ENCODE measurements at regions of chrX and their contacts with region 1.

Region 1: GRCh38 chrX:23952984-23953907 is 45.4 kb downstream of the CXorf58 start:
- DNase-seq: no peak
- ATAC-seq: peak in 1 of 2 donors; percentile 27

Region 2: GRCh38 chrX:24014388-24015018 is 61.3 kb after region 1 on chrX:
- intact Hi-C with region 1: loop called in 1 of 2 experiments (anchors 10 kb)
- DNase-seq: no peak
- ATAC-seq: peak in 1 of 2 donors; percentile 37

Region 3: DNA sequence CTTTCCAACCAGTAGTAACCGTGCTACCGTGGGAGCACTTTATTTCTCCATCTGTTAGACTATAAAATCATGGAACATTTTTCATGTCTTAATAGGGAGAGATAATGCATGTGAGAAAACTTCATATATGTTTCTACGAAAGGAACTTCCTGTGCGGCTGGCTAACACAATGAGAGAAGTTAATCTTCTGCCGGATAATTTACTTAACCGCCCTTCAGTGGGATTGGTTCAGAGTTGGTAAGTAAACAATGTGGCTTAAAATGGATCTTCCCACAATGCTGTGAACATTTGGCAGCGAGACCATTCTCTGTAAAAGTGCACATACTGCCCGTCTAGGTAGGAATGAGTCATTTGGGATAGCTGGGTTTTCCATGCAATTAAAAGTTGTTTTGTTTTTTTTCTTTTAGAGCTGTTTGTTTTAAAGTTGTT is 541.4 kb after region 1 on chrX:
- intact Hi-C with region 1: no loop called
- DNase-seq: no peak
- ATAC-seq: peak; percentile 62 to 91

Measured in left cardiac atrium (tissue), 4 donors.